ENCODE measurements at regions of chr7 and their contacts with region 1.

Region 1: DNA sequence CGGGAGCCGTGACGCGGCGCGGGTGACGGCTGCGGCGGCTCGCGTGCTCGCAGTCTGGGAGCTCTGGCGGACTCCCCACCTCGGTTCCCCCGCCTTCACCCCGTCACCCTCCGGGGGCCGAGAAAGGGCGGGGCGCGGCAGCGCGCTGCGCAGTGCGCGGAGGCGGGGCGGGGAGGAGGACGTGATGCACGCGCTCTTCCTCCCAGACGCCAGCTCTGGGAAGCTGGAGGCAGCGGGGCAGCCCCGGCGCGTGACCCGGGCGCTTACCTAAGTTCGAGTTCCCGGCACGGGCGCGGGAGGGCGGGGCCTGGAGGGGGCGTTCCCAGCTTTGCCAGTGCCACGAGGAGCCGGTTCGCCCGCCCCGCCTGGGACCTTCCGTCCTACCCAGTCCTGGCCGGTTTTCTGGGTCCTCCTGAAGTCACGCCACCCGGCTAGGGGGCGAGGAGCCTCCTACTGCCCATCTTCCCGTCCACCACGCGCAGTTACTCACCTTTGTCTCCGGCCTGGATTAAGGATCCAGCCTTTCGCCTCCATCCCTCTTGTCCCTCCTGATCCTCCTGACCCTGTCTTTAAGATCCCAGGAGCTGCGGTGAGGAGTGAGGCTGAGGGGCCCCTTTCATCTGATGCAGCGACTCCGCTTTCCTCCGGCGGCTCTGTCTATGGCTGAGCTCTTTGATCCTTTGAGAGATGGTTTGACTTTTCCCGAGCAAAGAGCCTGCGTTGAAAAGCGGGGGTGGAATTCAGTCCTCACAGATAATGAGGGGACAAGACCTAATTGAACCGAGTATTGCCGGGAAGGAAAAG is 470 bp upstream of the NAMPT start:
- DNase-seq: peak; percentile 99 to 100
- ATAC-seq: peak; percentile 97
- H3K4me3 ChIP-seq: peak overlapping the region; percentile 42 to 65
- H3K27ac ChIP-seq: peak overlapping the region; percentile 3 to 77
- H3K4me1 ChIP-seq: no peaks in the 10 kb centered on the region
- H3K27me3 ChIP-seq: no peaks in the 10 kb centered on the region

Region 2: DNA sequence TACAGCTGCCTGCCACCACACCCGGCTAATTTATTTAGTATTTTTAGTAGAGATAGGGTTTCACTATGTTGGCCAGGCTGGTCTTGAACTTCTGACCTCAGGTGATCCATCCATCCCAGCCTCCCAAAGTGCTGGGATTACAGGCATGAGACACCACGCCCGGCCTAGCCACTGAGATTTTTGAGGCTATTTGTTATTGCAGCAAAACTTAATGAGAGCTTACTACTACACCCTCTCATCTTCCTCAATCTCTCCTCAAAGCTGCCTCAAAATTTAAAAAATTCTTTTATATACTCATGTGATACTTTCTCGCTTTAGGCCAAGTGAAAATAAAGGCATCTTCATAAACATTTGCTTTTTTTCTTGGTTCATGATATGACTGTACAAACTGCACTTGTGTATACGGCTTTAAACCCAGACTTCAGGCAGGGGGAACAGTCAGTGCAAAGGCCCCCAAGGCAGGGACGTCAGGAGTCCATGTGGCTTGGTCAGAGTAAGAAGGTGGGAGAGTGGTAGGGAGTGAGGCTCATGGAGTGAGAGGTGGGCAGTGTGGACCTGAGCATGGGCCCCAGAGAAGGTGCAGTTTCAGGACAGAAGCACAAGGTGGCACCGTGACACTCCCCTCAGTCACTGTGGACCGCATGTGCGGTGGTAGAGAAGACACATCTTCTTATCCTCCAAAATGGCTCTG is 228.6 kb before region 1 on chr7:
- intact Hi-C with region 1: loop called in 1 of 2 experiments (anchors 10 kb)
- DNase-seq: peak; percentile 73 to 86
- ATAC-seq: peak; percentile 91
- H3K4me3 ChIP-seq: no peak overlapping the region
- H3K27ac ChIP-seq: no peak overlapping the region
- H3K4me1 ChIP-seq: no peaks in the 10 kb centered on the region
- H3K27me3 ChIP-seq: no peaks in the 10 kb centered on the region

Region 3: GRCh38 chr7:106176414-106177299 is 108.6 kb before region 1 on chr7:
- intact Hi-C with region 1: loop called in 1 of 2 experiments (anchors 2 kb)
- DNase-seq: peak; percentile 87 to 95
- ATAC-seq: peak; percentile 93
- H3K4me3 ChIP-seq: no peak overlapping the region
- H3K27ac ChIP-seq: no peak overlapping the region
- H3K4me1 ChIP-seq: no peaks in the 10 kb centered on the region
- H3K27me3 ChIP-seq: no peaks in the 10 kb centered on the region

Region 4: GRCh38 chr7:106216517-106216922 is 68.7 kb before region 1 on chr7:
- intact Hi-C with region 1: loop called in 1 of 2 experiments (anchors 10 kb)
- DNase-seq: peak in 1 of 2 donors; percentile 51
- ATAC-seq: peak; percentile 94
- H3K4me3 ChIP-seq: no peak overlapping the region
- H3K27ac ChIP-seq: peak overlapping the region in 1 of 2 donors; percentile 3
- H3K4me1 ChIP-seq: no peaks in the 10 kb centered on the region
- H3K27me3 ChIP-seq: no peaks in the 10 kb centered on the region

Region 5: DNA sequence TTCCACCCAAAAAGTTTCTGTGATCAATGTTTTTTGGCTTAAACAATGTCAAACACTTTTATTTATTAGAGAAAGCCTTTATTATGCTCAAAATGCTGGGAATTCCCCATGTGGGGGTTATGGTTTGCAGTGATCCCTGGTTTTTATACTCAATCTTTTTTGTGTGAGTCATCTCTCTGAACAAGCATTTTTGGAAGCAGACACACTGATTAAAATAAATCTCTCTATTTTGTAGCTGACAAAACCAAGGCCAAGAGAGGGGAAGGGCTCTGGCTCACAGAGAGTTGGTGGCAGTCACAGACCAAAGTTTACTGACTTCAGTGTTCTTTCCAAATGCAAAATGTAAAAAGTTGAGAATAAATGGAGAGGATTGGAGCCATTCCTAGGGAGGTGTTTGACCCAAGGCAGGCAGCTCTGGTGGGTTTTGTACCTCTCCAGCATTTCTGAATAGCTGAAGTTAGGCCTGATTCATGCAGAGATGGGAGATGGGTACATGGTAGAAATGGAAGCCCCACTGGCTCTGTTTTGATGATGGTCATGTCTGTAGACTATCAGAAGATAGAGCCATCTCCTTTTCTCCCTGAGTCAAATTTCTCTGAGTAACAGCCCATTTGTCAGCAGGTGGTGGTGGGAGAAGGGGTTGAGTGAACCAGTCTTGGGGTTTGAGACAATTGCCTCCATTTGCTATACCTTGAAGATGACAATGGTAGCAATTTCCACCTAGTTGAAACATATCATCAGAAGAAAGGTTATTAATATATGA is 44.9 kb after region 1 on chr7:
- intact Hi-C with region 1: loop called in 1 of 2 experiments (anchors 5 kb)
- DNase-seq: peak in 1 of 2 donors; percentile 50
- ATAC-seq: peak; percentile 80
- H3K4me3 ChIP-seq: no peak overlapping the region
- H3K27ac ChIP-seq: peak overlapping the region; percentile 36 to 49
- H3K4me1 ChIP-seq: peaks cover 3 to 22% of the 10 kb centered on the region in 2 donors
- H3K27me3 ChIP-seq: no peaks in the 10 kb centered on the region

Region 6: GRCh38 chr7:106346678-106347217 is 61.5 kb after region 1 on chr7:
- intact Hi-C with region 1: no loop called
- DNase-seq: no peak
- ATAC-seq: peak; percentile 72
- H3K4me3 ChIP-seq: no peak overlapping the region
- H3K27ac ChIP-seq: no peak overlapping the region
- H3K4me1 ChIP-seq: no peaks in the 10 kb centered on the region
- H3K27me3 ChIP-seq: no peaks in the 10 kb centered on the region

Region 7: GRCh38 chr7:106425017-106425719 is 139.9 kb after region 1 on chr7:
- intact Hi-C with region 1: loop called in 1 of 2 experiments (anchors 10 kb)
- DNase-seq: peak in 1 of 2 donors; percentile 86
- ATAC-seq: peak; percentile 85
- H3K4me3 ChIP-seq: no peak overlapping the region
- H3K27ac ChIP-seq: peak overlapping the region in 1 of 2 donors; percentile 17
- H3K4me1 ChIP-seq: no peaks in the 10 kb centered on the region
- H3K27me3 ChIP-seq: no peaks in the 10 kb centered on the region